Activated CD8-positive, alpha-beta T cell treated with anti-CD3 and anti-CD28 coated beads for 36 hours (primary cell): ENCODE measurements at regions of chr7 and their contacts with region 1.

Region 1: GRCh38 chr7:142301923-142302550 is 44.2 kb upstream of the PRSS58 start:
- DNase-seq: no peak
- ATAC-seq: peak; percentile 29
- H3K4me3 Mint-ChIP-seq: no peak overlapping the region
- H3K27ac Mint-ChIP-seq: no peak overlapping the region
- H3K4me1 Mint-ChIP-seq: peaks cover 16% of the 10 kb centered on the region
- H3K27me3 Mint-ChIP-seq: peaks cover 12% of the 10 kb centered on the region
- CTCF ChIP-seq: peak; percentile 72

Region 2: GRCh38 chr7:141975806-141976523 is 326.1 kb before region 1 on chr7:
- CTCF ChIA-PET with region 1: interaction called, 64 read pairs
- POLR2A ChIA-PET with region 1: no interaction called
- intact Hi-C with region 1: loop called (anchors 2 kb)
- DNase-seq: peak; percentile 80
- ATAC-seq: peak; percentile 88
- H3K4me3 Mint-ChIP-seq: peak overlapping the region; percentile 68
- H3K27ac Mint-ChIP-seq: peak overlapping the region; percentile 62
- H3K4me1 Mint-ChIP-seq: peaks cover 12% of the 10 kb centered on the region
- H3K27me3 Mint-ChIP-seq: no peaks in the 10 kb centered on the region
- CTCF ChIP-seq: peak; percentile 96

Region 3: GRCh38 chr7:142280263-142280662 is 21.8 kb before region 1 on chr7:
- CTCF ChIA-PET with region 1: interaction called, 10 read pairs
- POLR2A ChIA-PET with region 1: no interaction called
- intact Hi-C with region 1: no loop called
- DNase-seq: no peak
- ATAC-seq: no peak
- H3K4me3 Mint-ChIP-seq: no peak overlapping the region
- H3K27ac Mint-ChIP-seq: no peak overlapping the region
- H3K4me1 Mint-ChIP-seq: peaks cover 6% of the 10 kb centered on the region
- H3K27me3 Mint-ChIP-seq: peaks cover 19% of the 10 kb centered on the region
- CTCF ChIP-seq: no peak

Region 4: DNA sequence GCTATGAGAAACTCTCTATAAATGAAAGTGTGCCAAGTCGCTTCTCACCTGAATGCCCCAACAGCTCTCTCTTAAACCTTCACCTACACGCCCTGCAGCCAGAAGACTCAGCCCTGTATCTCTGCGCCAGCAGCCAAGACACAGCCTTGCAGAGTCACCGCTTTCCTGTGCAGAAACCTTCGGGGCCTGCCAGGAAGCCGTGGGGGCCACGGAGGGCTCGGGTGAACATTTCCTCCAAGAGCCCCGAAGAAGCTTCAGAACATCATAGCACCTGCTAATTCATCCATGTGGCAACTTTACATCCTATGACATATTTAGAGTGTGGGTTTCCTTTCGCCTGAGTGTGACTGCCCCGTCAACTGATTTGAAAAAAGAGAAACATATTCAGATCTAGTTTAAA is 11.5 kb after region 1 on chr7:
- CTCF ChIA-PET with region 1: interaction called, 62 read pairs
- POLR2A ChIA-PET with region 1: no interaction called
- intact Hi-C with region 1: no loop called
- DNase-seq: peak; percentile 53
- ATAC-seq: peak; percentile 77
- H3K4me3 Mint-ChIP-seq: peak overlapping the region; percentile 49
- H3K27ac Mint-ChIP-seq: no peak overlapping the region
- H3K4me1 Mint-ChIP-seq: peaks cover 16% of the 10 kb centered on the region
- H3K27me3 Mint-ChIP-seq: peaks cover 4% of the 10 kb centered on the region
- CTCF ChIP-seq: no peak

Region 5: DNA sequence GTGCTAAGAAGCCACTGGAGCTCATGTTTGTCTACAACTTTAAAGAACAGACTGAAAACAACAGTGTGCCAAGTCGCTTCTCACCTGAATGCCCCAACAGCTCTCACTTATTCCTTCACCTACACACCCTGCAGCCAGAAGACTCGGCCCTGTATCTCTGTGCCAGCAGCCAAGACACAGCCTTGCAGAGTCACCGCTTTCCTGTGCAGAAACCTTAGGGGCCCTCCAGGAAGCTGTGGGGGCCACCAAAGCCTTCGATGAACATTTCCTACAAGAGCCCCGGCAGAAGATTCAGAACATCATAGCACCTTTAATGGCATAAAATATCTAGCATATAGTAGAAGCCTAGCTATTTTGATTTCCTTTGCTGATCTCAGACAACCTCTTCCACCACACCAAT is 43.8 kb after region 1 on chr7:
- CTCF ChIA-PET with region 1: interaction called, 25 read pairs
- POLR2A ChIA-PET with region 1: interaction called, 4 read pairs
- intact Hi-C with region 1: no loop called
- DNase-seq: peak; percentile 68
- ATAC-seq: peak; percentile 81
- H3K4me3 Mint-ChIP-seq: peak overlapping the region; percentile 51
- H3K27ac Mint-ChIP-seq: peak overlapping the region; percentile 76
- H3K4me1 Mint-ChIP-seq: peaks cover 24% of the 10 kb centered on the region
- H3K27me3 Mint-ChIP-seq: no peaks in the 10 kb centered on the region
- CTCF ChIP-seq: no peak

Region 6: DNA sequence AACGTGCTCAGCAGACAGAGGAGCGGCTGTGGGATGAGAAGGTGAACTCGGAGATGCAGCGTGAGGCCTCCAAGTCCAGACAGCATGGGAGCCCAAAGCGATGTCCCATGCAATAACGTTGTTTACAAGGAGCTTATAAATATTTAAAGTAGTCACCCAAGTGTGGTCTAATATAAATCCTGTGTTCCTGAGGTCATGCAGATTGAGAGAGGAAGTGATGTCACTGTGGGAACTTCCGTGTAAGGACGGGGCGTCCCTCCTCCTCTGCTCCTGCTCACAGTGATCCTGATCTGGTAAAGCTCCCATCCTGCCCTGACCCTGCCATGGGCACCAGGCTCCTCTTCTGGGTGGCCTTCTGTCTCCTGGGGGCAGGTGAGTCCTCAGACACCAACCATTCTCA is 50.5 kb after region 1 on chr7:
- CTCF ChIA-PET with region 1: interaction called, 25 read pairs
- POLR2A ChIA-PET with region 1: no interaction called
- intact Hi-C with region 1: no loop called
- DNase-seq: peak; percentile 29
- ATAC-seq: peak; percentile 71
- H3K4me3 Mint-ChIP-seq: peak overlapping the region; percentile 69
- H3K27ac Mint-ChIP-seq: peak overlapping the region; percentile 67
- H3K4me1 Mint-ChIP-seq: peaks cover 21% of the 10 kb centered on the region
- H3K27me3 Mint-ChIP-seq: peaks cover 2% of the 10 kb centered on the region
- CTCF ChIP-seq: no peak